HepG2 (cell line): ENCODE measurements at regions of chr2 and their contacts with region 1.

Region 1: DNA sequence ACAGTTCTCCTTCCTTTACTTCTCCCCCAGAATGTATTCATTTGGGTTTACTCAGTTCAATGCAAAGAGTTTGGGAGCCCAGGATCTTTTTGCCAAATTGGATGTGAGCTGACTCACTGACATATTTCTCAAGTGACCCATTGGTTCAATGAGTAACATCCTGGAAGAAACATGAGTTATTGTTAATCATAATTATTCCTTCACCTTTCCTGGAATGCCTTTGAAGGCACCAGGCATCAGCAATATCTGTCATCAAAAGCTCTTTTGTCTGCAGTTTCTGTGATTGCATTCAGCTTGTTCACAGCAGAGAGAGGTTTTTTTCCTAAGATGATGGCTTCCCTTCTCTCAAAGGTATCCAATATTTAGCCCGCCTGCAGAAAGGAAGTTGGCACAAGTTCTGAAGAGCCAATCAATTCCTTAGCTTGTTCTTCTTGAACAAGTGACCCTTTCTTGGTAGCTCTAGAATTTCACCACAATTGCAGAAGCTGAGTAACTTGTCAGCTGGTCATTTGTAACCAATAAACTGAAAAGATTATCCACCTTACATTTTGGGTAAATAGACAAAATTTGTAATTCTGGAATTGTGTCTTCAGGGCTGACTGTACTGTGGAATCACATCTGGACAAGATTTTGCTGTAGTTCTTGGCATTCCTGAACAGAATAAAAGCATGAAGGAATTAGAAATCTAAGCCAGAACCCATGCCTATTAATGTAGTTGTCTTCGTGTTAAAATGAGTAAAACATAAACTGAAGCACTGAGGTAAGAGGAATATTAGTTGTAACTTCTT is 72.2 kb upstream of the TMEM17 start:
- DNase-seq: peak; percentile 96
- ATAC-seq: peak; percentile 78
- H3K4me3 ChIP-seq: no peak overlapping the region
- H3K27ac ChIP-seq: peak overlapping the region; percentile 71
- H3K4me1 ChIP-seq: peaks cover 66% of the 10 kb centered on the region
- H3K27me3 ChIP-seq: no peaks in the 10 kb centered on the region
- CTCF ChIP-seq: no peak
- EP300 ChIP-seq: peak; percentile 46 to 98; a peak in 2 of 4 replicates
- POLR2A ChIP-seq: no peak
- RAD21 ChIP-seq: no peak

Region 2: DNA sequence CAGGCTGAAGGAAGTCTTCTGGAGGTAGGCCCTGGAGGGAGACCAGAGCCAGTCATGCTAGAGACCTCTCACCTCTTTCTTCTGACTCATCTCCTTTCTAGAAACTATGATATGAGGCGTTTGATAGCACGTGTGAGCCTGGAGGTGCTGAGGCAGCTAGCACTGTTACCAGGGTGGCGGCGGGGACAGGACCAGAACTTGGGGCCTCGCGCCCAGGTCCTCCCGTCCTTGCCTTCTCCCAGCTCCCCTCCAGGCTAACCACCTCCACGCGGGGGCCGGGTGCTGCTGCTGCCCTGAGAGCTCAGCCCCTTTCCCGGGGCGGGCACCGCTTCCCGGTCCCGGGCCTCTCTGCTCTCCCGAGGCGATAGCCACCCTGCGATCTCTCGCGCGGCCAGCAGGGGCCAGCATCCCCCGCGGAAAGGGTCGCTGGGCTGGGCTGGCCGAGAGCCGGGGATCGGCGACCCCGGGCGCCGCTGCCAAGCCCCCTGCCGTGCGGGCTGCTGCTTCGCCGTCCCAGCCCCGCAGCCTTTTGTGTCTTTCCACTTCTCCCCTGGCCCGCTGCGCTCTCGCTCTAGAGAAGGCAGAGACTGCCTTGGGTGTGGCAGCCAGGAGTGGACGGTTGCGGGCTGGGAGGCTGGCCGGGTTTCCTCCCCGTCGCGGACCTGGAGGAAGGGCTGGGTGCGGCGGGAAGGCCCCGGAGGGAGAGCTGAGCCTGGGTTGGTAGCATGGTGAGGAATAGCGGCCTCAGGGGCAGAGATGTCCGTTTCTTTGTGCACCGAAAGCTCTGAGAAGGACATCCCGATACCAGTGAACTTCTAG is 121.3 kb before region 1 on chr2:
- CTCF ChIA-PET with region 1: no interaction called
- POLR2A ChIA-PET with region 1: interaction called, 13 read pairs
- in situ Hi-C with region 1: loop called (anchors 5 kb)
- intact Hi-C with region 1: no loop called
- DNase-seq: peak; percentile 63
- ATAC-seq: peak; percentile 97
- H3K4me3 ChIP-seq: peak overlapping the region; percentile 43 to 70 (median 59); a peak in 5 of 6 replicates
- H3K27ac ChIP-seq: peak overlapping the region; percentile 76
- H3K4me1 ChIP-seq: peaks cover 70% of the 10 kb centered on the region
- H3K27me3 ChIP-seq: no peaks in the 10 kb centered on the region
- CTCF ChIP-seq: peak; percentile 99
- EP300 ChIP-seq: peak; percentile 28 to 44; a peak in 1 of 4 replicates
- POLR2A ChIP-seq: peak in 1 of 2 experiments; percentile 28; a peak in 1 of 4 replicates
- RAD21 ChIP-seq: peak; percentile 100

Region 3: GRCh38 chr2:62565309-62565908 is 12.8 kb before region 1 on chr2:
- CTCF ChIA-PET with region 1: no interaction called
- POLR2A ChIA-PET with region 1: interaction called, 84 read pairs
- in situ Hi-C with region 1: no loop called
- intact Hi-C with region 1: loop called (anchors 1 kb)
- DNase-seq: peak; percentile 66
- ATAC-seq: no peak
- H3K4me3 ChIP-seq: no peak overlapping the region
- H3K27ac ChIP-seq: peak overlapping the region; percentile 55
- H3K4me1 ChIP-seq: peaks cover 72% of the 10 kb centered on the region
- H3K27me3 ChIP-seq: no peaks in the 10 kb centered on the region
- CTCF ChIP-seq: no peak
- EP300 ChIP-seq: peak in 1 of 2 experiments; percentile 55; a peak in 1 of 4 replicates
- POLR2A ChIP-seq: no peak
- RAD21 ChIP-seq: no peak

Region 4: DNA sequence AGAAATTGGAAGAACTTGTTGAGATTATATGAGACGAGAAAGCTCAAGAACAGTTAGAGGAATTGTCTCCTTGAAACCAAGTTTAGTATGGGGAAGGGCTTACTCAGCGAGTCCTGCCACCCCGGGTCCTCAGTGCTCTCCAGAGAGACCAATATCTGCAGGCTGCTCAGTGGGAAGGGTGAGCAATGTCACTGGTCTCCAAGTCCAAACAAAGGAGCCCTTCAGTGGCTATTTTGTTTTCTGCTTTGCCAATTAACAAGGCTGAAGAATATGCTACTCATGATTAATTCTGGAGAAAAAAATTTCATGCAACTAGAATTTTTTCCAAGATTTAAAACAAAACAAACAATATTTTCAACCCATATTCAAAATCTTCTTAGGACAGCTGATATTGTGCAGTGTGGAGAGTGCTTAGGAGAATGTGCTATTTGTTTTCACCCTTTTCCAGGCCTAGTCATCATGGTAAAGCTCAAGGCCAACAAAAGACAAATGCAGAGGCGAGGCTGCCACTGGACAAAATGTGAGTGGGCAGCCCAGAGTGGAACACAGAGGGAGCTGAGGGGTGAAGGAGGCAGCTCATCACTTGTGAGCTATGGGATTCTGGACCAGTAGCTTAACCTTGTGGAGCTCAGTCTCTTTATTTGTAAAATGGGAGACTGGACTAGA is 11.6 kb after region 1 on chr2:
- CTCF ChIA-PET with region 1: no interaction called
- POLR2A ChIA-PET with region 1: interaction called, 12 read pairs
- in situ Hi-C with region 1: no loop called
- intact Hi-C with region 1: no loop called
- DNase-seq: peak; percentile 65
- ATAC-seq: peak; percentile 92
- H3K4me3 ChIP-seq: no peak overlapping the region
- H3K27ac ChIP-seq: peak overlapping the region; percentile 52
- H3K4me1 ChIP-seq: peaks cover 58% of the 10 kb centered on the region
- H3K27me3 ChIP-seq: no peaks in the 10 kb centered on the region
- CTCF ChIP-seq: no peak
- EP300 ChIP-seq: 0 out of 4 replicates have a peak, but pooled peaks of 1 of the 2 experiments have one; percentile 35
- POLR2A ChIP-seq: no peak
- RAD21 ChIP-seq: no peak

Region 5: DNA sequence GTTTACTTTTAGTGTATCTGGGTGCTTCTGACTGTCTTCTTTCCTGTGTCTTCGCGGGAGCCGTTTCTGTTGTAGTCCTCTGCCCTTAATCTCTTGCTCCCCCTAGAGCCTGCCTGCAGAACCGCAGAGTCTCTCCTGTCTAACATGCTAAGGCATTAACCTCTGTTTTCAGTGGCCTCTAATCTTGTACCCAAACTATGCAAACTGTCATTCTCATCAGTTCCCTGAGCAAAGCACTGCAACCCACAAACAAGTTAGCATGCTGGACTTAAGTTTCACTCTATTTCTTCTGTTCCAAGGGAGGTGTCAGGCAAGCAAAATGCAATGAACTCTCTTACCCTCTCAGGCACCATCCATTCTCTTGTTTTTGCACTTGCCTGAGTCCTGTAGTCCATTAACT is 610.8 kb after region 1 on chr2:
- CTCF ChIA-PET with region 1: no interaction called
- POLR2A ChIA-PET with region 1: no interaction called
- in situ Hi-C with region 1: no loop called
- intact Hi-C with region 1: loop called (anchors 5 kb)
- DNase-seq: peak; percentile 71
- ATAC-seq: peak; percentile 74
- H3K4me3 ChIP-seq: no peak overlapping the region; a peak in 1 of 6 replicates
- H3K27ac ChIP-seq: no peak overlapping the region
- H3K4me1 ChIP-seq: peaks cover 58% of the 10 kb centered on the region
- H3K27me3 ChIP-seq: no peaks in the 10 kb centered on the region
- CTCF ChIP-seq: peak; percentile 92
- EP300 ChIP-seq: peak in 1 of 2 experiments; percentile 12; a peak in 1 of 4 replicates
- POLR2A ChIP-seq: no peak
- RAD21 ChIP-seq: peak; percentile 68